Ascending aorta (tissue), 2 donors: ENCODE measurements at regions of chr5 and their contacts with region 1.

Region 1: GRCh38 chr5:131609774-131610173 is 25.3 kb downstream of the RAPGEF6 start:
- DNase-seq: no peak
- H3K4me3 ChIP-seq: no peak overlapping the region
- H3K27ac ChIP-seq: peak overlapping the region; percentile 64 to 66
- H3K4me1 ChIP-seq: peaks cover 8 to 26% of the 10 kb centered on the region in 2 donors
- H3K27me3 ChIP-seq: no peaks in the 10 kb centered on the region
- CTCF ChIP-seq: no peak

Region 2: DNA sequence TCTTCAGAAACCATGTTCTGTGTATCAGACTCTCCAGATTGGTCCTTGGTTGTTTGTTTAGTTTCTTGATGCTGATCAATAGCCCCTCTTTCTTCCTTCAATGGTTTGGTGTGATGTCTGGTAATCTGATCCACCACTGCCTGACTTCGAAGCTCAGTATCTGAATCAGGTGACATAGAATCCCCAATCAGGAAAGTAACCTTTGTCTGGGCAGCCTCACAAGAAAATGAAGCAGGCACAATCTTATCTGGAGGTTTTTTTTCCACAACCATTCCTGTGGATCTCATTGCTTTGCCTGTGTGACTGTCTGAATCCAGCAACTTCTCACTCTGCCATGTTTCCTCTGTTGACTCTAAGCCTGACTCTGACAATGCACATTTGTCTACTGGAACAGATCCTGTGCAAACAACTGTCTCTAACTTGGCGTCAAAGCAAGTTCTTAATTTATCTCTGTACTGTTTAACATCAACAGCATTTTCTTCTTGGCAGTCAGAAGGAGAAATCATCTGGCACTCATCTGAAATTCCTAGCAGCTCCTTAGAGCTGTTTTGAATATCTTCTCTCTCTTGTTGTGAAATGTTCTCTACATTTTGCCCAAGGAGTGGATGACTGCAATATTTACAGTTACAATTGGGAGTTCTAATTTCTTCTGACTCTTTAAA is 62.4 kb after region 1 on chr5:
- intact Hi-C with region 1: loop called (anchors 10 kb)
- DNase-seq: no peak
- H3K4me3 ChIP-seq: no peak overlapping the region
- H3K27ac ChIP-seq: peak overlapping the region; percentile 80
- H3K4me1 ChIP-seq: peaks cover 4 to 23% of the 10 kb centered on the region in 2 donors
- H3K27me3 ChIP-seq: no peaks in the 10 kb centered on the region
- CTCF ChIP-seq: no peak

Region 3: GRCh38 chr5:132378580-132378979 is 768.8 kb after region 1 on chr5:
- intact Hi-C with region 1: no loop called
- DNase-seq: no peak
- H3K4me3 ChIP-seq: no peak overlapping the region
- H3K27ac ChIP-seq: peak overlapping the region; percentile 81 to 82
- H3K4me1 ChIP-seq: peaks cover 11 to 17% of the 10 kb centered on the region in 2 donors
- H3K27me3 ChIP-seq: no peaks in the 10 kb centered on the region
- CTCF ChIP-seq: no peak